ENCODE measurements at regions of chr6 and their contacts with region 1.

Region 1: DNA sequence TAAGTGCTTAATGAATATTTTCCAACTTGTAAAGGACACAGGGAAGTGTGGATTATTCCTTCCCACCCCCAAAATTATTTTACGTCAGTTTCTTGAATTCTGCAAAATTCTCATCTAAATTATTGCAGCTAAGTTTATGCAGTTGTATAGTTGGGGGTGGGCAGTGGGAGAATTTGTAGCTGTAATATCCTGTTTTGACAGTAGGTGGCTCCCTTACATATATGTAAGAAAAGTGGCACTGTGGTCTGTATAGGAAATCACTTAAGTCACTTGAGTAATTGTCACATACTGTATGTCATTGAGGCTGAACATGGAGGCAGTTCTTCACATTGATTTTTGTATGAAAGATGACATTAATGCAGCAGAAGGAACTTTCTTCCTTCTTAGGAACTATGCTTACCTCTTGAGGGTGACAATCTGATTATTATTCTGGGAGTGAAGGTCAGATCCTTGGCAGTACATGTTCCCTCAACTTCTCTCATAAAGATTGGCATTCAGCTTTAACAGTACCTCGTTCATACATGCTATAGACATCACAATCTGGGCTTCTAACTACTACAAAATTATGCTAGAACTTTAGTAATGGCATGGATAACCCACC is 14.7 kb upstream of the CFAP206 start:
- DNase-seq: peak; percentile 25
- H3K4me3 ChIP-seq: no peak overlapping the region
- H3K27ac ChIP-seq: no peak overlapping the region
- H3K4me1 ChIP-seq: no peaks in the 10 kb centered on the region
- H3K27me3 ChIP-seq: no peaks in the 10 kb centered on the region
- CTCF ChIP-seq: peak; percentile 66 to 69

Region 2: DNA sequence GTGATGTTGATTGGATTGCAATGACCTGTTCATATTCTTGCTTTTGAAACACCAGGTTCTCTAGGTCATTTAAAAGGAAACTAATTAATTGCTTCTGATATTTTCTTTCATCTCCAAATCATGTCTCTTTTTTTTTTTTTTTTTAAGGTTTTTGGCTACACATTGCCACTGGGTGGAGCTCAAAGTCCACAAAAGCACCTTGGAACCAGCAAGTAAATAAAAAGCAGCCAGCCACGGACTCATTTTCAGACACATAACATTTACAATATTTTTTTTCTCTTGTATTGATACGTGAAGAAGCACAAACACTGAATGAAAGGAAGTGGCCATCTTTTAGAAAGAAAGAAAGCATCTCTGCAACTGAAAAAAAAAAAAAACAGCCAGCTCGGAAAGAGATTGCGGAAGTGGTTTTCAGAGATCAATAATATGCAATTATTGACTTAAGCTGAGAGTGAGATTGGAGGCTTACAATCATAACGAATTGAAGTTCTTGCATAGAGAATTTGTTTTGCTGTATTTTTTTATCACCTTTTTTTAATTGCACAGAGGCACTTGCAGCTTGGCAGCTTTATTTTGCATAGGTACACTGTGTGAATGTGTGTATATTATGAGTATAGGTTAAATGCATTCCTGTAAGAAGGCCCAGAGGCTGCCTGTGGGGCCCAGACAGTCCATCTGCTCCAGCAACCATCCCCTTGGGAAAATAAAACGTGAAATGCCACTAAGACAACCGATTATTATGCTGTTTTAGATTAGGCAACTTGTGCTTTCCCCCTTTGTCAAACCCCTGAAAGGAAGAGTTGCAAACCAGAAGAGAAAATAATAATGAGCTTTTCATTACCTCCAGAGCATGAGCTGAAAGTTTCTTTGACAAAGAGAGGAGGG is 326.4 kb before region 1 on chr6:
- CTCF ChIA-PET with region 1: no interaction called
- dilution Hi-C with region 1: no loop called
- in situ Hi-C with region 1: no loop called
- intact Hi-C with region 1: loop called (anchors 1 kb)
- DNase-seq: peak; percentile 39
- H3K4me3 ChIP-seq: peak overlapping the region in 1 of 3 experiments; percentile 25
- H3K27ac ChIP-seq: no peak overlapping the region
- H3K4me1 ChIP-seq: no peaks in the 10 kb centered on the region
- H3K27me3 ChIP-seq: peaks cover 3% of the 10 kb centered on the region
- CTCF ChIP-seq: peak; percentile 40 to 65

Region 3: DNA sequence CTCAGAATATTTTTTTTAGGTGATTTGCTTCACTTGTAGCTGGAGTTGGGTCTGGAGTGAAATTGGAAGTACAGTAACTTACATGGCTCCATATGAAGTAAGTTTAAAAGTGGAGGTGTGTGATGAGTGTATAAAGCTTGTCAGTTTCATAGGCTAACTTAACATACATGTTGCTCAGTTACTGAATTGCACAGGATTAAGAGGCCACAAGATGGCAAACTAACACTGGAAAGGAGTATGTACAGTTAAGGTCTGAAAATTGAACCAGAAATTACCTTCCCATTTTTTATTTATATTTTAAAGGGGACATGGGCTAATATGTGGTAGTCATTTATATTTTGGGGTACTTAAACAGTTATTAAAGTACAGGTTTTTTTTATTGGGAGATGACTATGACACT is 116.0 kb before region 1 on chr6:
- CTCF ChIA-PET with region 1: no interaction called
- dilution Hi-C with region 1: no loop called
- in situ Hi-C with region 1: no loop called
- intact Hi-C with region 1: loop called (anchors 1 kb)
- DNase-seq: peak; percentile 23
- H3K4me3 ChIP-seq: no peak overlapping the region
- H3K27ac ChIP-seq: no peak overlapping the region
- H3K4me1 ChIP-seq: no peaks in the 10 kb centered on the region
- H3K27me3 ChIP-seq: no peaks in the 10 kb centered on the region
- CTCF ChIP-seq: peak; percentile 40 to 60

Region 4: GRCh38 chr6:87333591-87334181 is 59.4 kb before region 1 on chr6:
- CTCF ChIA-PET with region 1: no interaction called
- dilution Hi-C with region 1: no loop called
- in situ Hi-C with region 1: no loop called
- intact Hi-C with region 1: no loop called
- DNase-seq: peak; percentile 6
- H3K4me3 ChIP-seq: no peak overlapping the region
- H3K27ac ChIP-seq: no peak overlapping the region
- H3K4me1 ChIP-seq: no peaks in the 10 kb centered on the region
- H3K27me3 ChIP-seq: no peaks in the 10 kb centered on the region
- CTCF ChIP-seq: no peak

Region 5: GRCh38 chr6:87656857-87657256 is 263.7 kb after region 1 on chr6:
- CTCF ChIA-PET with region 1: no interaction called
- dilution Hi-C with region 1: no loop called
- in situ Hi-C with region 1: no loop called
- intact Hi-C with region 1: no loop called
- DNase-seq: no peak
- H3K4me3 ChIP-seq: no peak overlapping the region
- H3K27ac ChIP-seq: no peak overlapping the region
- H3K4me1 ChIP-seq: no peaks in the 10 kb centered on the region
- H3K27me3 ChIP-seq: no peaks in the 10 kb centered on the region
- CTCF ChIP-seq: no peak

Region 6: DNA sequence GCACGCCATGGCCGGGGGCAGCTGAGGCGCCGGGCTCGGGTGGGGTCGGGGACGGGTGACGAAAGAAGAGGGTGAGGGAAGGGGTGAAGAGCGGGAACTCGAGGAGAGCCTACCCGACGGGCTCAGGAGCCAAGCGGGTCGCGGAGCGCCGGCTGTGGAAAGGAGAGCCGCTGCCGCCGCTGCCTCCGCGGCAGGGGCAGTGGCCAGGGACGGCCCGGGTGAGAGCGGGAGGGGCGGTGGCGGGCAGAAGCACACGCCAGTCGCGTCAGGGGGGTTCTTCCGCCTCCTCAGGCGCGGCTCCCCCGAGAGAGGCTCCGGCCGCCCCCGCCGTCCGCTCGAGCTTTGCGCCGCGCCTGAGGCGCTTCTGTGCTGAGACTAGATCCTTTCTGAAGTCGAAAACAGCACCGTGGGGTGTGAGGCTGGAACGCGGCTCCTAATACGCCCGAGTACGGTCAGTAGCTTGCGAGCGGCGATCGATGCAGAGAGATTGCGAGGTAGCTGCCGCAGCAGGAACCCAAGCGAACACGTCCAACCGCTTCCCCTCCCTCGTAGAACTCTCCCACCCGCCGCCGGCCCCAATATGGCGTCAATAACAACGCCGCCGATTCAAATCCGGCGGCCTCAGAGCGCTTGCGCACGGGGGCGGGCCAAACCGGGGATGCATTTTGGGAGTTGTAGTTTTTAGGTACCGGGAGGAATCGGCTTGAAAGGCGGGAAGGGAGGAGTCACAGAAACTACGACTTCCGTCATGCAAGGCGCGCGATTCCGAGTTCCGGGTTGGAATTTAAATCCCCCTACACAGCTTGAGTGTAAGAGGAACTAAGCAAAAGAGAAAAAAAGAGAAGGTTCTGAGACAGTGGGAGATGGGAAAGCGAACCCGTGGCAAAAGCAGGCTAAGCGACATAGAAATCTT is 308.8 kb after region 1 on chr6 and contains the start of gene AKIRIN2:
- CTCF ChIA-PET with region 1: no interaction called
- dilution Hi-C with region 1: no loop called
- in situ Hi-C with region 1: no loop called
- intact Hi-C with region 1: loop called (anchors 10 kb)
- DNase-seq: peak; percentile 98
- H3K4me3 ChIP-seq: peak within 1 kb of the TSS; percentile 68 to 90 (median 85)
- H3K27ac ChIP-seq: peak within 1 kb of the TSS; percentile 94
- H3K4me1 ChIP-seq: peaks cover 15% of the 10 kb centered on the region
- H3K27me3 ChIP-seq: no peaks in the 10 kb centered on the region
- CTCF ChIP-seq: no peak
- total RNA-seq, gene AKIRIN2: 32.7 to 65.7 TPM

Region 7: GRCh38 chr6:87808005-87808757 is 415.1 kb after region 1 on chr6:
- CTCF ChIA-PET with region 1: no interaction called
- dilution Hi-C with region 1: no loop called
- in situ Hi-C with region 1: loop called in 1 of 2 experiments (anchors 25 kb)
- intact Hi-C with region 1: no loop called
- DNase-seq: peak; percentile 93
- H3K4me3 ChIP-seq: no peak overlapping the region
- H3K27ac ChIP-seq: no peak overlapping the region
- H3K4me1 ChIP-seq: peaks cover 17% of the 10 kb centered on the region
- H3K27me3 ChIP-seq: no peaks in the 10 kb centered on the region
- CTCF ChIP-seq: no peak

Region 8: GRCh38 chr6:88238065-88238464 is 844.9 kb after region 1 on chr6:
- CTCF ChIA-PET with region 1: no interaction called
- dilution Hi-C with region 1: no loop called
- in situ Hi-C with region 1: no loop called
- intact Hi-C with region 1: loop called (anchors 5 kb)
- DNase-seq: peak; percentile 8
- H3K4me3 ChIP-seq: no peak overlapping the region
- H3K27ac ChIP-seq: no peak overlapping the region
- H3K4me1 ChIP-seq: no peaks in the 10 kb centered on the region
- H3K27me3 ChIP-seq: no peaks in the 10 kb centered on the region
- CTCF ChIP-seq: peak; percentile 36 to 58